ENCODE measurements at regions of chrX and their contacts with region 1.

Region 1: GRCh38 chrX:50081282-50081889 is 119.4 kb downstream of the AKAP4 start:
- DNase-seq: no peak
- H3K4me3 ChIP-seq: no peak overlapping the region
- H3K27ac ChIP-seq: no peak overlapping the region
- H3K4me1 ChIP-seq: no peaks in the 10 kb centered on the region
- H3K27me3 ChIP-seq: no peaks in the 10 kb centered on the region
- CTCF ChIP-seq: peak; percentile 37; the same call in 1 of the 2 replicates

Region 2: GRCh38 chrX:49884290-49884862 is 197.0 kb before region 1 on chrX:
- CTCF ChIA-PET with region 1: no interaction called
- POLR2A ChIA-PET with region 1: no interaction called
- intact Hi-C with region 1: loop called (anchors 10 kb)
- DNase-seq: peak; percentile 14 to 35
- H3K4me3 ChIP-seq: no peak overlapping the region
- H3K27ac ChIP-seq: no peak overlapping the region
- H3K4me1 ChIP-seq: no peaks in the 10 kb centered on the region
- H3K27me3 ChIP-seq: no peaks in the 10 kb centered on the region
- CTCF ChIP-seq: peak; percentile 63

Region 3: DNA sequence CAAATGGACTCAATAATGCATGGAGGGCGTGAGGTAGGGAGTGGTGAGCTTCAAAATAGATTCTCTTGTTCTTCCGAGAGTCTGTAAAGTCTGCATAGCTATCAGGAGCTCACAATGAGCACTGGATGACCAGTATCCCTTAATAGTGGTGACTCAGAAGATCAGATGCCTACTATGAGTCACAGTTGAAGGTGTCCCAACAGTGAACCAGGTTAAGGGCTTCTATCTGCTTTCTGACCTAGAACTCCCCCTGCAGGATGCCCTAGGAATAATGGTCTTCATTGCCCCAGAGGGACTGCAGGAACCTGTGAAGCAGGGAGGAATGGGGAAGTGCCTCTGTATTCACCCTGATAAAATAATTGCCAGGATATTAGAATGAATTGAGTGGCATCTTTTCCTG is 367.2 kb after region 1 on chrX:
- CTCF ChIA-PET with region 1: no interaction called
- POLR2A ChIA-PET with region 1: no interaction called
- intact Hi-C with region 1: no loop called
- DNase-seq: peak; percentile 0 to 47
- H3K4me3 ChIP-seq: no peak overlapping the region
- H3K27ac ChIP-seq: no peak overlapping the region
- H3K4me1 ChIP-seq: no peaks in the 10 kb centered on the region
- H3K27me3 ChIP-seq: no peaks in the 10 kb centered on the region
- CTCF ChIP-seq: no peak; the same call in 1 of the 2 replicates

Measured in PC-9 (cell line).